Stomach (tissue), 19 donors: ENCODE measurements at regions of chr4 and their contacts with region 1.

Region 1: DNA sequence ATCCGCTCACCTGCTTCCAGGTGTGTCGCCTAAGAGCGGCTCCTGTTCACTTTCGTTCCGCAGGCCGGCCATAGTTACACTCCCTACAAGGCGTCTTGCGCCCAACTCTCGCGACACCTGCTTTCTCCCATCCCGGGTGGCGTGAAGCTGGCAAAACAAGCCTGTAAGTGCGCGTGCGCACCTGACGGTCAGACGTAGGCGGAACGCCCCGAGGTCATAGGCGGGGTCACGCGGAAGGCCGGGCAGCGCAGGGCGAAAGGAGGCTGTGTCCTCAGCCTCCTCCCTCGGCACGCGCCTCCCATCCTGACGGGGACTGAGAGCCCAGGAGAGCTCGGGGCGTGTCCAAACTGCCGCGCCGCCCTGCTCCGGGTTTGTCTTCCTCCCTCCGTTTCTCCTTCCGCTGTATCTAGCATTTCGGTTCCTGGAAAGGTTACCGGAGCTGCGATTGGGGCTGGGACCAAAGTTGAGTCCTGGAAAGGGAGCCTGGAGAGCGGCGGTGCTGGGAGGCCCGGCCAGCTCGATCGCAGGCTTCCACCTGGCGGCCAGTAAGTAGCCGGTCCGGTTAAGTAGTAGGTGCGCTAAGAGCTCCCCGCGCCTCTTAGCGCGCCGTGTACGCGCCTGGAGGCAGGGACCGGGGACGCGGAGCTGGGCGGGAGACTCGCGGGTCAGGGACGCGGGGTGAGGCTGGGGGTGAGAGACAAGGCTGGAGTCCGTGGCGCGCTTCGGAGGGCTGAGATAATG is at the starts of genes ABHD18 and MFSD8:
- DNase-seq: peak; percentile 100
- H3K4me3 ChIP-seq: peak within 1 kb of the TSS; percentile 60 to 99 (median 90)
- H3K27ac ChIP-seq: peak within 1 kb of the TSS; percentile 88 to 98 (median 94)
- H3K4me1 ChIP-seq: peaks cover 0 to 69% (median 40%) of the 10 kb centered on the region in 4 donors
- H3K27me3 ChIP-seq: no peaks in the 10 kb centered on the region
- CTCF ChIP-seq: peak in 5 of 7 experiments; percentile 27 to 56 (median 46)
- EP300 ChIP-seq: no peak
- POLR2A ChIP-seq: peak in 1 of 4 donors; percentile 68
- total RNA-seq, gene ABHD18: 9.6 to 27.2 (median 13.4) TPM
- total RNA-seq, gene MFSD8: 1.8 to 65.9 (median 21.0) TPM

Region 2: DNA sequence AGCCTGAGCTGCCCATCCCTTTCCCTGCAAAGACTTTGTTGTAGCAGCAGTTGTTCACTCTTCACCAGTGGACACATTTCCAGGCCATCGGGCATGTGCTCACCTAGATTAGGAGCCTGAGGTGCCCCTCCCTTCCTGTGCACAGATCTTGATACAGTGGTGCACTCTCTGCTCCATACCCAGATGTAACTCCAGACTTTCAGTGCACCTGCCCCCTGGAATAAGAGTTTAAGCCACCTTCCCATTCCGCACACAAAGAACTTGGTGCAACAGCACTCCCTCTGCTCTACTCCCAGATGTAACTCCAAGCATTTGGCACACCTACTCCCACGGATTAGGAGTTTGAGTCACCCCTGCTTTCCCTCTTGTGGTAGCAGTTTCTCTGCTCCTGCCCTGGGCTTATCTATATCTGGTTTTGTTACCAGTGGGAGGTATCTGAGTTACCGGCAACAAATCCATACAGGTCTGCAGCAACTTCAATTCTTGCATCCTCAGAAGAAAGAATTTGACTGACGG is 120.6 kb before region 1 on chr4:
- intact Hi-C with region 1: no loop called
- DNase-seq: no peak
- H3K4me3 ChIP-seq: no peak overlapping the region
- H3K27ac ChIP-seq: no peak overlapping the region
- H3K4me1 ChIP-seq: no peaks in the 10 kb centered on the region
- H3K27me3 ChIP-seq: no peaks in the 10 kb centered on the region
- CTCF ChIP-seq: no peak
- EP300 ChIP-seq: no peak
- POLR2A ChIP-seq: no peak

Region 3: GRCh38 chr4:128060699-128061565 is 95.7 kb after region 1 on chr4 and contains the start of gene LARP1B:
- intact Hi-C with region 1: loop called (anchors 10 kb)
- DNase-seq: peak; percentile 97 to 99
- H3K4me3 ChIP-seq: peak within 1 kb of the TSS; percentile 80 to 88 (median 84)
- H3K27ac ChIP-seq: peak within 1 kb of the TSS; percentile 91 to 98 (median 96)
- H3K4me1 ChIP-seq: peaks cover 6 to 33% (median 22%) of the 10 kb centered on the region in 4 donors
- H3K27me3 ChIP-seq: no peaks in the 10 kb centered on the region
- CTCF ChIP-seq: no peak
- EP300 ChIP-seq: no peak
- POLR2A ChIP-seq: peak in 2 of 4 donors; percentile 21 to 77
- total RNA-seq, gene LARP1B: 2.3 to 113 (median 40.7) TPM